ENCODE measurements at regions of chr15 and their contacts with region 1.

Region 1: DNA sequence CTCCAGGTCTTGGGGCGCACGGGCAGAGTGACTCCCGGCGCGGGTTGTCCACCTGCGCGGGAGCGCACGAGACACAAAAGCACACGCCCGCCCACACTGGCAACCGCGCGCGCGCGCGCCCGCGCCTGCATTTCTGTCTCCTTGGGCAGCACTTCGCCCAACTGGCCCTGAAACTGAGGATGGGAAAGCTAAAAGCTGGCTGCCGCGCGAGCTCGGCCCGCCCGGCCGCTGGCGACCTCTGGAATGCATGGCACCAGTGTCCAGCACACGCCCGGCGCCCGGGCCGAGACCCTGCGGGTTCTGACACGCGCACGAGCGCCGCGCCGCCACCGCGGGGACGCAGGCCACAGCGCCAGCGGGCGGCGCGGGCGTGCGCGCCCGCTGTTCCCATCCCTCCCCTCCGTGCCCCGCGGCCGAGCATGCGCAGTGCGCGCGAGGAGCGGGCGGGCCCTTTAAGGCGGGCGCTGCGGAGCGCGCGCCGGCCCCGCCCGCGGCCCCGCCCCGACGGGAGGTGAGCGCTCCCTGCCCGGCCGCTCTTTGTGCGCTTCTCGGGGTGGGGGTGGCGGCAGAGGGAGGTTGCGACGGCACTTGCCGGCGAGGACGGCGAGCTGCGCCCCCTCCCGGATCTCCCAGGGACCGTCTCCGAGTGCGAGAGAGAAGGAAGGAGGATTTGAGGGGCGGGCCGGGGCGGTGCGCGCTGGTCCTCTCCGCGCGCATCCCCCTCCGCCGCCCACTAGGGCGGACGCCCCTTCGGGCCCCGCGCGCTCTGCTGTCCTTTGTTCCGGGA is 1.0 kb upstream of the MEX3B start:
- DNase-seq: peak; percentile 76
- H3K4me3 ChIP-seq: peak overlapping the region; percentile 65 to 79
- H3K27ac ChIP-seq: peak overlapping the region; percentile 87 to 91
- H3K4me1 ChIP-seq: no peaks in the 10 kb centered on the region
- H3K27me3 ChIP-seq: no peaks in the 10 kb centered on the region
- CTCF ChIP-seq: peak; percentile 38 to 74 (median 64)
- POLR2A ChIP-seq: no peak

Region 2: GRCh38 chr15:81312790-81313543 is 733.9 kb before region 1 on chr15:
- intact Hi-C with region 1: loop called (anchors 10 kb)
- DNase-seq: peak; percentile 78
- H3K4me3 ChIP-seq: no peak overlapping the region
- H3K27ac ChIP-seq: peak overlapping the region; percentile 29 to 38
- H3K4me1 ChIP-seq: no peaks in the 10 kb centered on the region
- H3K27me3 ChIP-seq: no peaks in the 10 kb centered on the region
- CTCF ChIP-seq: no peak
- POLR2A ChIP-seq: no peak

Region 3: GRCh38 chr15:81480645-81481053 is 566.2 kb before region 1 on chr15:
- intact Hi-C with region 1: loop called (anchors 5 kb)
- DNase-seq: peak; percentile 56
- H3K4me3 ChIP-seq: no peak overlapping the region
- H3K27ac ChIP-seq: no peak overlapping the region
- H3K4me1 ChIP-seq: no peaks in the 10 kb centered on the region
- H3K27me3 ChIP-seq: no peaks in the 10 kb centered on the region
- CTCF ChIP-seq: peak; percentile 73 to 97 (median 84)
- POLR2A ChIP-seq: no peak

Region 4: GRCh38 chr15:81666839-81667238 is 380.0 kb before region 1 on chr15:
- intact Hi-C with region 1: no loop called
- DNase-seq: no peak
- H3K4me3 ChIP-seq: no peak overlapping the region
- H3K27ac ChIP-seq: no peak overlapping the region
- H3K4me1 ChIP-seq: no peaks in the 10 kb centered on the region
- H3K27me3 ChIP-seq: no peaks in the 10 kb centered on the region
- CTCF ChIP-seq: no peak
- POLR2A ChIP-seq: no peak

Region 5: GRCh38 chr15:81723701-81724100 is 323.2 kb before region 1 on chr15:
- intact Hi-C with region 1: loop called (anchors 10 kb)
- DNase-seq: no peak
- H3K4me3 ChIP-seq: no peak overlapping the region
- H3K27ac ChIP-seq: no peak overlapping the region
- H3K4me1 ChIP-seq: no peaks in the 10 kb centered on the region
- H3K27me3 ChIP-seq: no peaks in the 10 kb centered on the region
- CTCF ChIP-seq: no peak
- POLR2A ChIP-seq: no peak

Region 6: GRCh38 chr15:81897057-81897677 is 149.7 kb before region 1 on chr15:
- intact Hi-C with region 1: loop called (anchors 10 kb)
- DNase-seq: no peak
- H3K4me3 ChIP-seq: no peak overlapping the region
- H3K27ac ChIP-seq: no peak overlapping the region
- H3K4me1 ChIP-seq: peaks cover 5% of the 10 kb centered on the region
- H3K27me3 ChIP-seq: no peaks in the 10 kb centered on the region
- CTCF ChIP-seq: no peak
- POLR2A ChIP-seq: no peak

Region 7: DNA sequence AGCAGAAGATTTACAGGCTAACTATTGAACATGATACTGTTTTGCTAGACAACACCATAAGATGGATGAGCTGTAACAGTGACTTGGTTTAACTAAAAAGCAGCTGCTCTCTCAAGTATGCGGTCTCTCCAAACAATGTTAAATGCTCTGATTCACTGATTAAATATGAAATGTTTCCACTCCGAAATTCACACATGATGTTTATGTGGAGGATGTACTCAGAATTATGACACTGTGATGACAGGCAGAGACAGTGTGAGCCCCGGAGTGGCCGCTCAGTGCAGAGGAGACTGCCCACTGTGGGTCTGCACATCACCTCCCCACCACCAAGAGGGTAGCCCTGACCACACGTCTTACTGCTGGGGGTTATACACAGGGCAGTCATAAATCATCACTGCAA is 82.9 kb after region 1 on chr15:
- intact Hi-C with region 1: loop called (anchors 5 kb)
- DNase-seq: no peak
- H3K4me3 ChIP-seq: no peak overlapping the region
- H3K27ac ChIP-seq: peak overlapping the region; percentile 15 to 31
- H3K4me1 ChIP-seq: no peaks in the 10 kb centered on the region
- H3K27me3 ChIP-seq: no peaks in the 10 kb centered on the region
- CTCF ChIP-seq: no peak
- POLR2A ChIP-seq: no peak

Region 8: GRCh38 chr15:82197733-82198594 is 151.1 kb after region 1 on chr15:
- intact Hi-C with region 1: loop called (anchors 5 kb)
- DNase-seq: peak; percentile 66
- H3K4me3 ChIP-seq: no peak overlapping the region
- H3K27ac ChIP-seq: no peak overlapping the region
- H3K4me1 ChIP-seq: no peaks in the 10 kb centered on the region
- H3K27me3 ChIP-seq: no peaks in the 10 kb centered on the region
- CTCF ChIP-seq: peak; percentile 22 to 79 (median 76)
- POLR2A ChIP-seq: no peak